Astrocyte of the cerebellum (primary cell): ENCODE measurements at regions of chr11 and their contacts with region 1.

Region 1: DNA sequence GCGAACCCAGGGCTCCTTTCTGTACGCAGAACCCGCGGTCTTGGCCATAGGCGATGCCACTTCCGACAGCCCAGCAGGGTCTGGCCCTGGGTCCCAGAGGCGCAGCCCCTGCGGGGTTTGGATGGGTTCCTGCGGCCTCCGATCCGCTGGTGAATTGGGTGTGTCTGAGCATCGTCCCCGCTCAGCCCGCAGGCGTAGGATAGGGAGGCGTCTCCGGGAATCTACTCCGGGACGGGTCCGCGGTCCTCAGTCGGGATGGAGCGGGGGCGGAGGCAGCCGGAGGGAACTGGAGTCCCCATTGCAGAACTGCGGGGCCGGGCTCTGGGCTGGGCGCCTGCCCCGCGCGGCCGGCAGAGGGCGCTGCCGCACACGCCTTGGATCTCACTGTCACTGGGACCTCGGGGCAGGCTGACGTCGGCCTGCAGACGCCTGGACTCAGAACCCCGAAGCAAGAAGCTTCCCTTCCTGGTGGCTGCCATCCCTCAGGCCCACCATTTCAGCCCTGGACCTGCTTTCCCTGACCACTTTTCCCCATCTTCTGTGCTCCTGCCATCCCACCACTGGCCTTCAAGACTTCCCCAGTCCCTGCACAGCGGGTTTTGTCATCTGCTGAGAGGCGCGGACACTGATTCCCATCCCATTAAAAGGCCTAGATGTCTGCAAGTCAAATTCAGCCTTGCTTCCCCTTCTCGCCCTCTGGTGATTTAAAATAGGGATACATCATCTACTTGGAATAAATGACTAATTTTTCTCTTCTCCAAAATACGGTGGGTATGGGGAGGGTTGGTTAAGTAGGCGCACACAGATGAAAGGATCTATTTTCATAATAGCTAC is 38.3 kb upstream of the CREB3L1 start:
- DNase-seq: no peak
- H3K4me3 ChIP-seq: peak overlapping the region; percentile 43
- CTCF ChIP-seq: peak; percentile 96

Region 2: DNA sequence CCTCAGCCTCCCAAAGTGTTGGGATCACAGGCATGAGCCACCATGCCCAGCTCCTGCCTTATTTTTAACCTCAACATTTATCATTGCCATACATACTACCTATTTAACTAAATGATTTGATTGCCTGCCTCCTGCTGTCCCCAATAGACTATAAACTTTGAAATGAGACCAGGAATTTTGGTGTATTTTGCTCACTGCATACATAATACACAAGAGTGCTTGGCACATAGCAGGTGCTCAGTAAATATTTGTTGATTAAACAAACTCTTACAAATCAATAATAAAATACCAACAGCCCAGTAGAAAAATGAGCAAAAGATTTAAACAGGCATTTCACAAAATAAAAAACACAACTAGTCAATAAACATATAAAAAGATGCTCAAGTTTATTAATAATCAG is 68.4 kb before region 1 on chr11:
- in situ Hi-C with region 1: no loop called
- DNase-seq: no peak
- H3K4me3 ChIP-seq: no peak overlapping the region
- CTCF ChIP-seq: no peak

Region 3: GRCh38 chr11:46200537-46201281 is 38.5 kb before region 1 on chr11:
- in situ Hi-C with region 1: no loop called
- DNase-seq: no peak
- H3K4me3 ChIP-seq: no peak overlapping the region
- CTCF ChIP-seq: no peak

Region 4: DNA sequence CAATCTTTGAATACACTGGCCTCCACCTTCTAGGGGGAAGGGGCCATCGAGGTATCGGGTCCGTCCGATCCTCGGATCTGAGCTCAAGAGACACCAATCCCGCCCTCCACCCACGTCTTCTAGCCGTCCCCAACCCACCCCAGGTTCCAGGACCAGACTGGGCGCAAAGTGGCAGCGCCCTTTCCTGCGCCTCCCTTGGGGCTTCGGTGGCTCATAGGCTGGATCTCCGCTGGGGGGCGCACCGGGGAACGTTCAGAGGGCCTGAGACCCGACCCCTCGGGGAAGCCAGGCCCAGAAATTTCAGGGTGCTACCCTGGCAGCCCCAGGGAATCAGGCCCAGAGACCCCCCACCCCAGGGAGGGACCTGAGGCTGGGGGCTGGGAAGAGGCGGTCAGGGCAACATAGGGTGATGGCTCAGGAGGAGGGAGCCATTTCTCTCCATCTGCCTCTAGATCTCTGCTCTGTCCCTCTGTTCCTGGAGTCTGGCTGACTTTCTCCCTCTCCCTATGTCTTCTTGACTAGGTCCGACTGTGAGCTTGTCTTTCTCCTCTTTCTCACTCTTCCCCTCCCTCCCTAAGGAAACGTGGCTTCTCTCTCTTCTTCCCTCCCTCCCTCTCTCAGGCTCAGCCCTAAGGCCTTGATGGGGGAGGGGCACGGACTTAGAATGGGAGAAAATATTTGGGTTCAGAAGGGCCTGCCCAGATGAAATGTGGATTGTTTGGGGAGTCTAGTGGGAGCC is 39.4 kb after region 1 on chr11:
- in situ Hi-C with region 1: loop called (anchors 5 kb)
- DNase-seq: no peak
- H3K4me3 ChIP-seq: peak overlapping the region; percentile 96
- CTCF ChIP-seq: peak; percentile 76

Region 5: GRCh38 chr11:46315033-46315738 is 76.0 kb after region 1 on chr11:
- in situ Hi-C with region 1: loop called (anchors 10 kb)
- DNase-seq: peak; percentile 68
- H3K4me3 ChIP-seq: no peak overlapping the region
- CTCF ChIP-seq: peak; percentile 94